OCI-LY7 (cell line): ENCODE measurements at regions of chr3 and their contacts with region 1.

Region 1: DNA sequence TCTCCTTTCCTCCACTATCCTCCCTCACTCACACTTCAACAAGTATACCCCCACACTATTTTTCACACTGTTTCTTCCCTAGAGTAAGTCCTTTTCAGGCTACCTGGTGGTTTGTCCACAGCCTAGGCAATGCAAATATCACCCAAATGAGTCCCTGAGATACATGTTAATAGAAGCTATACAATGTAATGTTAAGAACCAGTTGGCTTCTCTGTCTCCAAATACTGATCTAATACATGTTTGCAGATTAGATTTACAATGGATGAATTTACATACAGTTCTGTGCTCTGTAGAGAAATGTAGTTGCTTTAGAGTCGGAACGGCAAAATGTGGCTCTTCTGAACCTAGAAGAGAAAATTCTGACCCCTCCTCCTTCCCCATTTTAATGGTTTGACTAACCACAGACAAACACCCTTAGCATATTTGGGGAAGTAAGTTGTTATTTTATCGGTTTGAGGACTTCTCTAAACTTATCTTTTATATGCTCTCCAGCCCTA is 63.6 kb upstream of the MBNL1 start:
- DNase-seq: peak; percentile 48
- H3K4me3 ChIP-seq: peak overlapping the region; percentile 60
- H3K27ac ChIP-seq: peak overlapping the region; percentile 23
- H3K4me1 ChIP-seq: peaks cover 53% of the 10 kb centered on the region
- CTCF ChIP-seq: no peak

Region 2: DNA sequence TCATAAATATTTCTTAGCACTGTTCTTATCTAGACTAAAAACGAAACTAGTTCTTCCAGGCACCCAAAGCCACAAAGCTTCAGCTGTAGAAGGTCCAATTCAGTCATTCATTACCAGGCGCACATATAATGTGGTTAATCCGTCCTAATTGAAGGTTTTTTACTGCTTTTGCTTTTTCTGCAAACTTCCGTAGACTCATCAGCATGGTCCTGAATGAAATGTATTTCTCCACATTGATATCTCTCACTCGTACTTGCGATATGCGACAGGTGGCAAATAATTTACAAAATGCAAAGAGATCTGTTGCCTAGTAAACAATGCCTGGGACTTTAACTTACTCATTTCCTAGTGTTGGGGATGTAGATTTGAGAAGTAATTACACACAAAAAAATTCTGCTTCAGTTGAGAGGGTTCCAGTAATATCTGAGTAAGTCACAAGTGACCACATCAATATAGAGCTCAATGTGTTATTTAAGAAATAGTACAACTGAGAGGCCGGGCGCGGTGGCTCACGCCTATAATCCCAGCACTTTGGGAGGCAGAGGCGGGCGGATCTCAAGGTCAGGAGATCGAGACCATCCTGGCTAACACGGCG is 11.4 kb before region 1 on chr3:
- CTCF ChIA-PET with region 1: no interaction called
- POLR2A ChIA-PET with region 1: interaction called, 16 read pairs
- intact Hi-C with region 1: no loop called
- DNase-seq: peak; percentile 32
- H3K4me3 ChIP-seq: peak overlapping the region; percentile 64
- H3K27ac ChIP-seq: no peak overlapping the region
- H3K4me1 ChIP-seq: peaks cover 42% of the 10 kb centered on the region
- CTCF ChIP-seq: no peak

Region 3: GRCh38 chr3:152222327-152222726 is 17.2 kb after region 1 on chr3:
- CTCF ChIA-PET with region 1: no interaction called
- POLR2A ChIA-PET with region 1: interaction called, 28 read pairs
- intact Hi-C with region 1: no loop called
- DNase-seq: no peak
- H3K4me3 ChIP-seq: no peak overlapping the region
- H3K27ac ChIP-seq: no peak overlapping the region
- H3K4me1 ChIP-seq: peaks cover 12% of the 10 kb centered on the region
- CTCF ChIP-seq: no peak